Activated CD8-positive, alpha-beta T cell treated with anti-CD3 and anti-CD28 coated beads for 36 hours (primary cell): ENCODE measurements at regions of chr1 and their contacts with region 1.

Region 1: GRCh38 chr1:28248283-28249012 is 10.9 kb upstream of the SESN2 start:
- DNase-seq: peak; percentile 95
- ATAC-seq: peak; percentile 31
- H3K4me3 Mint-ChIP-seq: peak overlapping the region; percentile 84
- H3K27ac Mint-ChIP-seq: peak overlapping the region; percentile 96
- H3K4me1 Mint-ChIP-seq: peaks cover 51% of the 10 kb centered on the region
- H3K27me3 Mint-ChIP-seq: no peaks in the 10 kb centered on the region
- CTCF ChIP-seq: peak; percentile 93

Region 2: GRCh38 chr1:28235755-28236655 is 12.4 kb before region 1 on chr1 and contains the start of gene ATP5IF1:
- CTCF ChIA-PET with region 1: interaction called, 23 read pairs
- POLR2A ChIA-PET with region 1: interaction called, 61 read pairs
- intact Hi-C with region 1: no loop called
- DNase-seq: peak; percentile 98
- ATAC-seq: peak; percentile 95
- H3K4me3 Mint-ChIP-seq: no peak within 1 kb of the TSS
- H3K27ac Mint-ChIP-seq: no peak within 1 kb of the TSS
- H3K4me1 Mint-ChIP-seq: peaks cover 14% of the 10 kb centered on the region
- H3K27me3 Mint-ChIP-seq: no peaks in the 10 kb centered on the region
- CTCF ChIP-seq: no peak
- total RNA-seq, gene ATP5IF1: 169 to 170 TPM

Region 3: DNA sequence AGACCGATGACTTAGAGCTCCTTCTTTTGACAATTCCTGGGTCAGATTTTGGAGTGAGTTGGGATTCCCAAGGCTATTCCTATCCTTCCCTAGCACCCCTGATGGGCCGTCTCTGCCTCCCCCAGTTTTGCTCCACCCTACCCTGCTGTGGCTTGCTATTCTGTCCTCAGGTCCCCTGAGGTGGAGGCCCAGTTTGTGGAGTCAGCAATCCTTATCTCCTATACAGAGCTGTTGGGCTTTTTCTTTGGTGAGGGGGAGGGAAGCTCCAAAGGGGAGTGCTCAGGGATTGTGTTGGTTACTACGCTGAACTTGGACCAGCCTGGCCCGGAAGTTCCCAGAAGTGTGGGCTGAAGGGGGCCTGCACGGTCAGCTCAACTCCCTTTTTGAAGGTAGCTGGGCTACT is 18.5 kb after region 1 on chr1:
- CTCF ChIA-PET with region 1: interaction called, 90 read pairs
- POLR2A ChIA-PET with region 1: interaction called, 137 read pairs
- intact Hi-C with region 1: no loop called
- DNase-seq: no peak
- ATAC-seq: no peak
- H3K4me3 Mint-ChIP-seq: no peak overlapping the region
- H3K27ac Mint-ChIP-seq: no peak overlapping the region
- H3K4me1 Mint-ChIP-seq: peaks cover 6% of the 10 kb centered on the region
- H3K27me3 Mint-ChIP-seq: no peaks in the 10 kb centered on the region
- CTCF ChIP-seq: no peak

Region 4: GRCh38 chr1:28329395-28330153 is 81.1 kb after region 1 on chr1:
- CTCF ChIA-PET with region 1: interaction called, 20 read pairs
- POLR2A ChIA-PET with region 1: interaction called, 22 read pairs
- intact Hi-C with region 1: loop called (anchors 5 kb)
- DNase-seq: peak; percentile 57
- ATAC-seq: peak; percentile 10
- H3K4me3 Mint-ChIP-seq: peak overlapping the region; percentile 95
- H3K27ac Mint-ChIP-seq: peak overlapping the region; percentile 98
- H3K4me1 Mint-ChIP-seq: peaks cover 32% of the 10 kb centered on the region
- H3K27me3 Mint-ChIP-seq: no peaks in the 10 kb centered on the region
- CTCF ChIP-seq: no peak

Region 5: DNA sequence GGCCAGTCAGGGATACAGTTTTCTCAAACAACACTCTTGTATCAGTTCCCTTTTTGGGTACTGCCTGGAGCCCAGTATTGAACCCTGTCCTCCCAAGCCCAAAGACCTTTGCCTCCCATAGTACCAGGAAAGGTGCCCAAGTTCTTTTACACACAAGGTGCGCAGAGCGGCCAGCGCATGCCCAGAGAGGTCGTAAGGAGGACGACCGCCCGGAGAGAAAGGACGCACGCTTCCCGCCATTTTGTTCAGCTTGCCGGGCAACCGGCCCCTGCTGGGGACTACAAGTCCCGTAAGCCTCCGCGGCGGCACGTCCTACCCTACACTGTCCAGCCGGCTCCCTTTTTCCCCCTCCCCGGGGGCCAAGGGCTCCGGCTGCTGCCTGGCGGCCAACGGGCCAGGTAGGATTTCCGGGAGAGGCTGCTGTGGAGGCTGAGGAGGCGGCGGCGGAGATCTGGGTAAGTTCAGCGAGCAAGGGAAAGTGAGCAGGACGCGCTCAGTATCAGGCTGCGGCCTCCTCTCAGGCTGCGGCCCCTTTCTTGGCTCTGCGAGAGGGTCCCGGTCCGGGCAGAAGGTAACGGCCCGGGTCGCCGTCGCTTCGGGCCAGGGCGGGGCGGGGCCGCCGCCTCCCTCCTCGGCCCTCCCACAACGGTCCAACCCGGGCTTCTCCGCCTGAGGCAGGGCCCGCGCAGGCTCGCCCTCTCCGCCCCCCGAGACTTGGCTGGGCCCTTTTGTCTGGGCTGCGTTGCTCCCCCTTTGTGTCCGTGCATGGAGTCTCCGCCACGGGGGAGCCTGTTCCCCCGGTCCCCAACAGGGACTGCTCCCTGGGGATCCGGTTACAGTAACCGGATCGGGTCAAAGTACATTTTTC is 121.2 kb after region 1 on chr1 and contains the start of gene PHACTR4:
- CTCF ChIA-PET with region 1: interaction called, 17 read pairs
- POLR2A ChIA-PET with region 1: interaction called, 3 read pairs
- intact Hi-C with region 1: no loop called
- DNase-seq: peak; percentile 92
- ATAC-seq: peak; percentile 93
- H3K4me3 Mint-ChIP-seq: peak within 1 kb of the TSS; percentile 97
- H3K27ac Mint-ChIP-seq: peak within 1 kb of the TSS; percentile 94
- H3K4me1 Mint-ChIP-seq: peaks cover 36% of the 10 kb centered on the region
- H3K27me3 Mint-ChIP-seq: no peaks in the 10 kb centered on the region
- CTCF ChIP-seq: no peak
- total RNA-seq, gene PHACTR4: 20.3 to 20.9 TPM